Left lung (tissue), 14 donors: ENCODE measurements at regions of chr13 and their contacts with region 1.

Region 1: DNA sequence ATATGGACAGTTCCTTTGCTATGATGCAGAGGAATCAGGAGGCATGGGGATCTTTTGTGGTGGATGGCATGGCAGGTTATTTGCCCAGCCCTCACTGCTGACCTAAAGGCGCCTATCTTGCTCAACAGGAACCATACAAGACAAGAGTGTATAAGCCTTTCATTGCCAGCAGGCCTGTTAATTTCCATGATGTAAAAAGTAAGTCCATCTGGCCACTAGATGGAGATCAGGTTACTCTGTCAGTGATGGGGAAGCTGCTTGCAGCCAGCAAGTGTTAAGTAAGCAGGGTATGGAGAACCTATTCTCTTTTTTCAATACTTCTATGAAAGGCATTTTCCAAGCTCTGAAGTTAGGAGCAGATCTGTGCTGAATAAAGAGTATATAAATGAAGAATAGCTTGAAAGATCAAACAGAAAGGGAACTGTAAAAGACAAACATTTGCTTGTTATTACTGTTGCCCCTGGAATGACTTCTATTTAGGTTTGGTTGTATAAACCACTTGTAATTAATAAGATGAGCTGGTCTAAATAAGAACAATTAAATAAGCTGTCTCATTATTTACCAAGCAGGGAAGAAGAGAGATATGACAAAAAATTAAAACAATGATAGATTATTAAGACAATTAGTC is 210.9 kb downstream of the RGCC start:
- DNase-seq: peak in 3 of 4 donors; percentile 42 to 92 (median 75)
- ATAC-seq: peak; percentile 99
- H3K4me3 ChIP-seq: no peak overlapping the region
- H3K27ac ChIP-seq: no peak overlapping the region
- H3K4me1 ChIP-seq: peaks cover 0 to 3% of the 10 kb centered on the region in 2 donors
- H3K27me3 ChIP-seq: no peaks in the 10 kb centered on the region
- CTCF ChIP-seq: peak; percentile 65 to 70

Region 2: DNA sequence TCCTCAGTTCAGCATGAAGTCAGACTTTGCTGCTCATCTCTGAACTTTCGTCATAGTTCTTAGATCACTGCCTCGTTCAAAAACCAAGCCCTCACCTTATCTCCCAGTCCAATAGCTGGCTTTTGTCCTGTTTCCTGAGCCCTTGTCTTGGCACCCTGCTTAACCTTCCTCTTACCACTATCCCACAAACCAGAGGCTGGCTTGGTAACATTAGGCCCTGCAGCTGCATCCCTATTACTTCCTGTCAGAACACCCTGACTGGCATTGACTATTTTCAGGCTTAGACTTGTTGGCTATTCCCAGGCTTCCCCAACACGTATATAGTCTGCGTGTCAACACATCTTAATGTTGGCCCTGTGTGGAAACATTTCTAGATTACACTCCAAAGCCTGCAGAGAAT is 120.3 kb after region 1 on chr13:
- intact Hi-C with region 1: no loop called
- DNase-seq: no peak
- ATAC-seq: no peak
- H3K4me3 ChIP-seq: no peak overlapping the region
- H3K27ac ChIP-seq: no peak overlapping the region
- H3K4me1 ChIP-seq: no peaks in the 10 kb centered on the region
- H3K27me3 ChIP-seq: no peaks in the 10 kb centered on the region
- CTCF ChIP-seq: no peak

Region 3: DNA sequence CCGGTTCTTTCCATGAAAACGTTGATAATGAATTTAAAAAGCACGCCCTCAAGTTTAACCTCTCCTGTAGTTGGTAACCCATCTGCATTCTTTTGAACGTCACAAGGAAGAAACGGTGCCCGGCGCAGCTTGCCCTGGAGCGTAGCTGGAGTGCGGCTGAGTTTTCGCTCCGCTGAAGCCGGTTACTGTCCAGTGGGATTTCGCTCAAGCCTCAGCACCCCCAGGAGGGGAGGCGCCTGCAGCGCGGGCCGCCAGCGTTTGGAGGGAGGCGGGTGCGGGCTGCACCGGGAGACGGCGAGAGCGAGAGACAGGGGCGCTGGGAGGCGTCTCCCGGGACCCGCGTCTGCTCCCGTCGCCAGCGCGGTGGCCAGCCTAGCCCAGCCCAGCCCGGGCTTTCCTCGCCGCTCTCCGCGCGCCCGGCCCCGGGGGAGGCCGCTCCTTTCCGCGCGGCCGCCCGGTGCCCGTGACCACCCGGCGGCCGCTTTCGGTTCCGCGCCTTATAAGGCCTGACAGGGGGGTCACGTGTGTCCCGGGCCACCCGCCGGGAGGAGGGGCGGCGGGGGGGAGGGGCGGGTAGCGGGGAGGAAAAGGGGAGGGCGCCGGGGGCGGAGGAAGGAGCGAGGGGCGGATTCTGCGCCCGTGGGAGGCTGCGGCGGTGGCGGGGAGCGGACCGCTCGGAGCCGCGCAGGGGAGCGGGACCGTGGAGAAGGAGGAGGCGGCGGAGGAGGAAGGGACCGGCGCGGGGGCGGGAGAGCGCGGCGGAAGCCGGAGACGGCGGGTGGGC is 371.9 kb after region 1 on chr13:
- intact Hi-C with region 1: loop called in 1 of 2 experiments (anchors 10 kb)
- DNase-seq: peak; percentile 84 to 96 (median 92)
- ATAC-seq: peak; percentile 90
- H3K4me3 ChIP-seq: peak overlapping the region; percentile 63 to 82
- H3K27ac ChIP-seq: peak overlapping the region; percentile 87 to 95
- H3K4me1 ChIP-seq: peaks cover 4 to 24% of the 10 kb centered on the region in 2 donors
- H3K27me3 ChIP-seq: peaks cover 0 to 19% of the 10 kb centered on the region in 2 donors
- CTCF ChIP-seq: peak in 1 of 2 donors; percentile 22

Region 4: DNA sequence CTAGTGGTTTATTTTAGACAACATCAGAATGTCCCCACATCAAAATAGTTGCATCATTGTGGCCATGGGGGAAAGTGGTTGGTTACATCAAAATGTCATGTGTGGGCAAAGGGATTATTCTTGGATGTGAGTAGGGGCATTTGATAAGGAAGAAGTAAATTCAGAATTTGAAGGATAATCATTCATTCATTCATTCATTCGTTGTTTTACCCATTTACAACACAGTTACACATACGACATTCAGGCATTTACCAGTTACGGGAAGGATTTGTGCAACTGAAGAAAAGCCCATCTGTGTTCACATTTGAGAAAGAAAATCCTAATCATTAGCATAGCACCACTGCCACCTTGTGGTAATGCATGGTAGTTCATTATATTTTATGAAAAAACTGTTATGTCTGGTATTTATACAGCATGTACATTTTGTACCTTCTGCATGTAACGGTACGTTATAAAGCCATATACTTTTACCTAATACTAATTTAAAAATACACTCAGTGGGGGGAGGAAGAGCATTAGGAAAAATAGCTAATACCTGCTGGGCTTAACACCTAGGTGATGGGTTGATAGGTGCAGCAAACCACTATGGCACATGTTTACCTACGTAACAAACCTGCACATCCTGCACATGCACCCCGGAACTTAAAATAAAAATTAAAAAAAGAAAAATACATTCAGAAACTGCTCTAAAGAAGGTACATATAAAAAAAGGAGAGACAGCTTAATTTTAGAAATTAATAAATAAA is 442.3 kb after region 1 on chr13:
- intact Hi-C with region 1: loop called in 1 of 2 experiments (anchors 10 kb)
- DNase-seq: peak in 2 of 4 donors; percentile 77 to 84
- ATAC-seq: peak; percentile 82
- H3K4me3 ChIP-seq: no peak overlapping the region
- H3K27ac ChIP-seq: no peak overlapping the region
- H3K4me1 ChIP-seq: peaks cover 0 to 9% of the 10 kb centered on the region in 2 donors
- H3K27me3 ChIP-seq: no peaks in the 10 kb centered on the region
- CTCF ChIP-seq: peak; percentile 64 to 83

Region 5: GRCh38 chr13:42548731-42549551 is 880.7 kb after region 1 on chr13:
- intact Hi-C with region 1: no loop called
- DNase-seq: no peak
- ATAC-seq: peak; percentile 50
- H3K4me3 ChIP-seq: no peak overlapping the region
- H3K27ac ChIP-seq: no peak overlapping the region
- H3K4me1 ChIP-seq: no peaks in the 10 kb centered on the region
- H3K27me3 ChIP-seq: no peaks in the 10 kb centered on the region
- CTCF ChIP-seq: no peak